ENCODE measurements at regions of chr14 and their contacts with region 1.

Region 1: GRCh38 chr14:45486599-45486998 is 233.6 kb upstream of the MIS18BP1 start:
- DNase-seq: no peak
- H3K4me3 ChIP-seq: no peak overlapping the region
- H3K27ac ChIP-seq: no peak overlapping the region
- H3K4me1 ChIP-seq: no peaks in the 10 kb centered on the region
- H3K27me3 ChIP-seq: no peaks in the 10 kb centered on the region
- CTCF ChIP-seq: no peak

Region 2: GRCh38 chr14:45519766-45520165 is 33.2 kb after region 1 on chr14:
- CTCF ChIA-PET with region 1: no interaction called
- dilution Hi-C with region 1: loop called (anchors 5 kb)
- in situ Hi-C with region 1: no loop called
- intact Hi-C with region 1: no loop called
- DNase-seq: no peak
- H3K4me3 ChIP-seq: no peak overlapping the region
- H3K27ac ChIP-seq: no peak overlapping the region
- H3K4me1 ChIP-seq: no peaks in the 10 kb centered on the region
- H3K27me3 ChIP-seq: no peaks in the 10 kb centered on the region
- CTCF ChIP-seq: no peak